ENCODE measurements at regions of chr3 and their contacts with region 1.

Region 1: GRCh38 chr3:77038468-77038929 is 1.4 kb upstream of the ROBO2 start:
- DNase-seq: peak; percentile 48 to 93 (median 78)

Region 2: GRCh38 chr3:76765526-76765925 is 273.0 kb before region 1 on chr3:
- intact Hi-C with region 1: no loop called
- DNase-seq: peak in 1 of 42 donors; percentile 37

Region 3: DNA sequence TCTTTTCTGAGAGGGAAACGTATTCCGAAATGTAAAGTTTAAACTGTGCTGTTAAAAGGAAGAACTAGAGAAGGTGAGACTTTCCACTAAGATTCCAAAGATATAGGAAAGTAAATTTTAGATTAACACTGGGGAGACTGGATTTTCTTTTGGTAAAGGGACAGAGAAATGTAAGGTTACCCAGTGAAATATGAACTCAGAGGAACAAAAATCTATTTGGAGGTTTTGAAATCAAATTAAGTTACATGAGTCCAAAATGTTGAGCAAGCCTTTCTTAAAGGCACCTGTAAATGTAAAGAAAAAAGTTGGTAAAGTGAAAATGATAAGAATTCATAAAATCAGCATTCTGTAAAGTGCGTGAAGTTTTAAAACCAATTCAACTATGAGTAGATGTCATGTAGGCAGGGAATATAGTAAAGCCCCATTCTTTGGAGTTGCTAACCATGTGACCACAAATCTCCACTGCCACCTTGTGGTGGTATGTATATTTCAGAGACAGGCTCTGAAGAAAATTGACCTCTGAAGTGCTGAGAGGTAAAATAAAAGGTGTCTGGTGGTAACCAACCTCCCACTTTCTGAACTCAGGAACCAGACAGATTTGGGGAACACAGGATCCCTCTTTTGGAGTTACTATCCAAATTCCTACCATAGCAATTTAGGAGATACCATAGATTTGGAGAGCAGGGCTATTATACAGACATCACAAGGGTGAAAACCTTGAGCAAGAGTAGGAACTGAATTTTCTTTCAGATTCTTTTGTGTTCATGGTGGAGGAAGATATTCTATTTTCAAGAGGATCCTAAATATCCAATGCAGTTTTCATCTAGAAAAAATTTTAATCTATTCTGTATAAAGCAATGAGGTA is 216.7 kb after region 1 on chr3:
- intact Hi-C with region 1: loop called (anchors 5 kb)
- DNase-seq: peak in 26 of 42 donors; percentile 10 to 81 (median 49)

Measured in head of caudate nucleus (tissue), 42 donors.